H1 (cell line): ENCODE measurements at regions of chr9 and their contacts with region 1.

Region 1: GRCh38 chr9:17116400-17116837 is 18.4 kb upstream of the CNTLN start:
- DNase-seq: no peak
- H3K4me3 ChIP-seq: no peak overlapping the region
- H3K27ac ChIP-seq: no peak overlapping the region
- H3K4me1 ChIP-seq: peaks cover 0 to 3% (median 0%) of the 10 kb centered on the region in 4 experiments; a peak in 1 of 7 replicates
- H3K27me3 ChIP-seq: no peaks in the 10 kb centered on the region
- CTCF ChIP-seq: peak in 1 of 3 experiments; percentile 33; a peak in 2 of 4 replicates
- EP300 ChIP-seq: no peak
- POLR2A ChIP-seq: no peak
- RAD21 ChIP-seq: peak; percentile 38 to 46

Region 2: DNA sequence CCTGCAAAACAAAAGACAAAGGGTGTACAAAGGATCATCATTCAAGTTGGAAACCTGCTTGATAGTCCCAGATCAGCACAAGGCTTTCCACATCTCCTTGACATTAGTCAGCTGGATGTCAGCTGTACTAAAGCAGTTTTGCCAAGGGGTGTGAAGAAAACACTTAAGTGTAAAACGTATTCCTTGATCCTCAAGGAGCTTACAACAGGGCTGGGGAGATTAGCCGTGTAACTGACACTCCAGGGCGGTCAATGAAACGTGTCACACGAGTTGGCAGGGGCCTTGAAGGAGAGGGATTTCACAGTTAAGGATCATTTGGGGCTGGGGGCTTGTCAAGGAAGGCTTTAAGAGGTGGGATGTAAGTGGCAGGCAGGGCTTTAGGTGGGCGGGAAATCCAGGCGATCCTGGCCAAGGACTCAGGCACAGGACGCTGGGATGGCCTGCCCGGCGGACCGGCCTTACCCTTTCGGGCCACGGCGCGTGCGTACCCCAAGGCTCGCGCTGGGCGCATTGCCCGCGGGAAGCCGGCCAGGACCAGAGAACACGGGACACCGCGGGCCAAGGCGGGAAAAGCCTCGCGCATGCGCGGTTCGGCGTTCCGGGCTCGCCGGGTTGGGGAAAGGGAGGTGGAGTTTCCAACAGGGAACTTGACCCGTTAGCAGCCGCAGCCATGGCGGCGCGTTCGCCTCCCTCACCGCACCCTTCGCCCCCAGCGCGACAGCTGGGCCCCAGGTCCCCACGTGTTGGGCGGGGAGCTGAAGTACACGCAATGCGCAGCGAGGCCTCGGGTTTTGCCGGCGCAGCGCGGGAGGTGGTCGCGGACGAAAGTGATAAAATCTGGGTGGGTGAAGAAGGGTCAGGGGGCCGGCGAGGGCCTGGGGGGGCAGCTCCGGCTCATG is 18.2 kb after region 1 on chr9 and contains the start of gene CNTLN:
- CTCF ChIA-PET with region 1: interaction called, 11 read pairs
- POLR2A ChIA-PET with region 1: no interaction called
- DNase-seq: peak; percentile 84 to 99
- H3K4me3 ChIP-seq: peak within 1 kb of the TSS; percentile 62 to 89 (median 74)
- H3K27ac ChIP-seq: peak within 1 kb of the TSS; percentile 87
- H3K4me1 ChIP-seq: peaks cover 0 to 4% (median 3%) of the 10 kb centered on the region in 4 experiments; a peak in 5 of 7 replicates
- H3K27me3 ChIP-seq: peaks cover 0 to 14% (median 9%) of the 10 kb centered on the region in 4 experiments; a peak in 5 of 7 replicates
- CTCF ChIP-seq: no peak
- EP300 ChIP-seq: peak in 1 of 2 experiments; percentile 58; a peak in 1 of 3 replicates
- POLR2A ChIP-seq: peak; percentile 93 to 98
- RAD21 ChIP-seq: peak in 1 of 2 experiments; percentile 4; a peak in 1 of 4 replicates
- total RNA-seq, gene CNTLN: 10.5 and 10.8 TPM in 2 replicates

Region 3: GRCh38 chr9:17171309-17172094 is 55.1 kb after region 1 on chr9:
- CTCF ChIA-PET with region 1: interaction called, 13 read pairs
- POLR2A ChIA-PET with region 1: no interaction called
- DNase-seq: no peak
- H3K4me3 ChIP-seq: no peak overlapping the region
- H3K27ac ChIP-seq: peak overlapping the region; percentile 36; the same call in 1 of the 2 replicates
- H3K4me1 ChIP-seq: no peaks in the 10 kb centered on the region; a peak in 1 of 7 replicates
- H3K27me3 ChIP-seq: no peaks in the 10 kb centered on the region
- CTCF ChIP-seq: peak in 1 of 3 experiments; percentile 16; a peak in 1 of 4 replicates
- EP300 ChIP-seq: no peak
- POLR2A ChIP-seq: no peak
- RAD21 ChIP-seq: peak; percentile 18 to 40; a peak in 3 of 4 replicates

Region 4: GRCh38 chr9:17216011-17216410 is 99.6 kb after region 1 on chr9:
- CTCF ChIA-PET with region 1: no interaction called
- POLR2A ChIA-PET with region 1: no interaction called
- DNase-seq: no peak
- H3K4me3 ChIP-seq: no peak overlapping the region
- H3K27ac ChIP-seq: no peak overlapping the region
- H3K4me1 ChIP-seq: no peaks in the 10 kb centered on the region
- H3K27me3 ChIP-seq: no peaks in the 10 kb centered on the region
- CTCF ChIP-seq: no peak
- EP300 ChIP-seq: no peak
- POLR2A ChIP-seq: no peak
- RAD21 ChIP-seq: no peak

Region 5: DNA sequence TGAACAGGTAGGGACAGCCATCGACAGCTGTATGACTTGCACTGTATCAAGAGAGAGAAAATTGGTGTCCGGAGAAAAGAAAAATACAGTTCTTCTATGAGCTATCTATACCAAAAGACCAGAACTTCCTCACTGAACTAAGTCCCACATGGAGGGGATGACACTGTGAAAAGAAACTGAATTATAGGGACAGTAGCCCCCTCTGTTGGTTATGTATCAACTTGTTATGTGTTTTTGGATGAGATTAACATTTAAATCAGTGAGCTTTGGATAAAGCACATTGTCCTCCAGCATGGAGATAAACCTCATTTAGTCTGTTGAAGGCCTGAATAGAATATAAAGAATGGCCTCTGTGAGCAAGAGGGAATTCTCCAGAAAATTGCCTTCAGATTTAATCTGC is 285.9 kb after region 1 on chr9:
- CTCF ChIA-PET with region 1: interaction called, 19 read pairs
- POLR2A ChIA-PET with region 1: no interaction called
- DNase-seq: no peak
- H3K4me3 ChIP-seq: no peak overlapping the region
- H3K27ac ChIP-seq: no peak overlapping the region
- H3K4me1 ChIP-seq: peaks cover 0 to 9% (median 3%) of the 10 kb centered on the region in 4 experiments; a peak in 4 of 7 replicates
- H3K27me3 ChIP-seq: no peaks in the 10 kb centered on the region
- CTCF ChIP-seq: peak in 2 of 3 experiments; percentile 36 to 55; a peak in 2 of 4 replicates
- EP300 ChIP-seq: no peak
- POLR2A ChIP-seq: no peak
- RAD21 ChIP-seq: peak; percentile 78 to 80